Mammary epithelial cell (primary cell): ENCODE measurements at regions of chr7 and their contacts with region 1.

Region 1: DNA sequence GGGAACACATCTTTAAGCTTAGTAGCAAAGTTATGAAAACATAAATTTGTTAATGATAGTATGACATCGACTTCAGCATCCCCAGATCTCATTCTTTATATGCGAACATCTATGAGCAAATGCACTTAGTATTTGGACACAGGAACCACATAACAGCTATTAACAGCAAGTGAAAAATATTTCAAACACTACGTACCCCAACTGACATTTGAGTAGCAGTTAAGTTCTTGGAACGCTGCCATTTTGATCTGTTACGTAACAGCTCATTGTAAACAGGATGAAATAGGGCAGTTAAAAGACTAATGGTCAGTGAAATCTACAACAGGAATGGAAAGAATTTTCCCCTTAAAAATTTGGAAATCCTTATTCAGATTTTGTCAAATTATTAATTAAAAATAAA is 428.8 kb downstream of the TNS3 start:
- DNase-seq: peak; percentile 28
- H3K4me3 ChIP-seq: no peak overlapping the region
- H3K27ac ChIP-seq: no peak overlapping the region
- H3K4me1 ChIP-seq: no peaks in the 10 kb centered on the region
- H3K27me3 ChIP-seq: peaks cover 5% of the 10 kb centered on the region
- CTCF ChIP-seq: no peak

Region 2: GRCh38 chr7:46391231-46392201 is 761.6 kb before region 1 on chr7:
- CTCF ChIA-PET with region 1: no interaction called
- dilution Hi-C with region 1: no loop called
- in situ Hi-C with region 1: no loop called
- intact Hi-C with region 1: no loop called
- DNase-seq: no peak
- H3K4me3 ChIP-seq: no peak overlapping the region
- H3K27ac ChIP-seq: no peak overlapping the region
- H3K4me1 ChIP-seq: peaks cover under 1% of the 10 kb centered on the region
- H3K27me3 ChIP-seq: no peaks in the 10 kb centered on the region
- CTCF ChIP-seq: no peak

Region 3: DNA sequence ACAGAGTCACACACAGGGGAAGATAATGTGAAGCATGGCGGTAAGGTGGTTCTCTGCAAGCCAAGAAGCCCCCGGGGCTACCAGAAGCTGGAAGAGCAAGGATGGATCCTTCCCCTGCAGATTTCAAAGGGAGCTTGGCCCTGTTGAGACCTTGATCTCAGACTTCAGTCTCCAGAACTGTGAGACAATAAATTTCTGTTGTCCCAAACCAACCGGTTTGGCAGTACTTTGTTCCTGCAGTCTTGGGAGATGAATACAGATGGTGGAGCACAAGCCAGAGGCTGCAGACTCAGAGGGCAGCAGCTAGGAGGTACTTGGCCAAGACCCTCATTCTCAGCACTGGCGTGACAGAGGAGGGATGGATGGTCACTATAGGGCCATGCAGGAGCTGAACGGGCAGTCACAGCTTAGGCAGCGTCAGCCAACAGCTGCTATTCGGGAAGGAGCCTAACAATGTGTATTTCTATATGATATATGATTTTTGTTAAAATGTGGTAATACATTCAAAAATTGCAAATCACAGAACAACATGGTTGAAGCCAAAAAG is 41.5 kb after region 1 on chr7:
- CTCF ChIA-PET with region 1: no interaction called
- dilution Hi-C with region 1: no loop called
- in situ Hi-C with region 1: no loop called
- intact Hi-C with region 1: loop called (anchors 1 kb)
- DNase-seq: no peak
- H3K4me3 ChIP-seq: no peak overlapping the region
- H3K27ac ChIP-seq: no peak overlapping the region
- H3K4me1 ChIP-seq: no peaks in the 10 kb centered on the region
- H3K27me3 ChIP-seq: no peaks in the 10 kb centered on the region
- CTCF ChIP-seq: no peak

Region 4: GRCh38 chr7:47202146-47202783 is 49.2 kb after region 1 on chr7:
- CTCF ChIA-PET with region 1: no interaction called
- dilution Hi-C with region 1: loop called (anchors 5 kb)
- in situ Hi-C with region 1: no loop called
- intact Hi-C with region 1: no loop called
- DNase-seq: peak; percentile 67
- H3K4me3 ChIP-seq: no peak overlapping the region
- H3K27ac ChIP-seq: no peak overlapping the region
- H3K4me1 ChIP-seq: peaks cover 7% of the 10 kb centered on the region
- H3K27me3 ChIP-seq: no peaks in the 10 kb centered on the region
- CTCF ChIP-seq: no peak

Region 5: DNA sequence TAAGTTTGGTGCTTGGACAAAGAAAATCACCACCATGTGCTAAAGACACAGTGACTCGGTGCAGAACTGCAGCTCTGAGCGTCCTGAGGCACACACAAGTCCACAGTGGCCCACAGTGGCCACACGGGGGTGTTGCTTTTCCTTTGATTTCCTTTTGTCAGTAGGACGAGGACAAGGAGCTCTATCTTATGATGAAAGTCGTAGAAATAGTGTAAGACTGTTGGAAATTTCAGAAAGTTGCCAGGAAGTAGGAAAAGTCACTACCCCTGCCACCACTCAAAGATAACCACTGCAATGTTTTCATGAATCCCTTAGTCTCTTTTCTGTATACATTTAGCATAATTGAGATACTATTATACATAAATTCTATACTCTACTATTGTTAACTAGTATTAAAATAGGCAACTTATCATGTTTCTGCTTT is 282.8 kb after region 1 on chr7:
- CTCF ChIA-PET with region 1: no interaction called
- dilution Hi-C with region 1: no loop called
- in situ Hi-C with region 1: no loop called
- intact Hi-C with region 1: no loop called
- DNase-seq: peak; percentile 56
- H3K4me3 ChIP-seq: no peak overlapping the region
- H3K27ac ChIP-seq: no peak overlapping the region
- H3K4me1 ChIP-seq: no peaks in the 10 kb centered on the region
- H3K27me3 ChIP-seq: no peaks in the 10 kb centered on the region
- CTCF ChIP-seq: peak; percentile 70 to 73